CD4-positive, alpha-beta T cell (primary cell): ENCODE measurements at regions of chr7 and their contacts with region 1.

Region 1: GRCh38 chr7:57579454-57579853 is 129.5 kb downstream of the ZNF716 start:
- DNase-seq: no peak
- ATAC-seq: no peak
- H3K4me3 ChIP-seq: no peak overlapping the region
- H3K4me3 Mint-ChIP-seq: no peak overlapping the region
- H3K27ac ChIP-seq: no peak overlapping the region
- H3K27ac Mint-ChIP-seq: no peak overlapping the region
- H3K4me1 ChIP-seq: no peaks in the 10 kb centered on the region
- H3K4me1 Mint-ChIP-seq: no peaks in the 10 kb centered on the region
- H3K27me3 ChIP-seq: no peaks in the 10 kb centered on the region
- H3K27me3 Mint-ChIP-seq: no peaks in the 10 kb centered on the region
- CTCF ChIP-seq: no peak

Region 2: DNA sequence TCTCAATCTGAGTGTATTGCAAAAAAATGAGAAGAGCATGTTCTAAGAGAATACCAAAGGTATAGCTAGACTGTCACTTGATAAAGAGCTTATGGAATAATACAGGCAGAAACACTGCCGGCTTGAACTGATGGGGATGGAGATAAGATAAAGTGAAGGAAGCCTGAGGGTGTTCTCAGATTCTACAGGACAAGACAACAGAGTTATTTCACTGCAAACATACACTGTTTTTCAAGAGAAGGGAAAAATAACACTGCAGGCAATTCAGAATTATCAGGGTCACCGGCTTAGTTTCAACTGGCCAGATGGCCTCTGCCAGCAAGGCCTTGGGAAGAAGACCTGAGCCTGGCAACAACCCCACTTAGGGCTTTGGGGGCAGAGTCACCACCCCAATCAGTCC is 49.5 kb before region 1 on chr7:
- CTCF ChIA-PET with region 1: no interaction called
- POLR2A ChIA-PET with region 1: no interaction called
- intact Hi-C with region 1: loop called in 1 of 2 experiments (anchors 10 kb)
- DNase-seq: no peak
- ATAC-seq: no peak
- H3K4me3 ChIP-seq: no peak overlapping the region
- H3K4me3 Mint-ChIP-seq: no peak overlapping the region
- H3K27ac ChIP-seq: no peak overlapping the region
- H3K27ac Mint-ChIP-seq: no peak overlapping the region
- H3K4me1 ChIP-seq: no peaks in the 10 kb centered on the region
- H3K4me1 Mint-ChIP-seq: no peaks in the 10 kb centered on the region
- H3K27me3 ChIP-seq: no peaks in the 10 kb centered on the region
- H3K27me3 Mint-ChIP-seq: no peaks in the 10 kb centered on the region
- CTCF ChIP-seq: no peak

Region 3: GRCh38 chr7:57646901-57647246 is 67.4 kb after region 1 on chr7:
- CTCF ChIA-PET with region 1: no interaction called
- POLR2A ChIA-PET with region 1: no interaction called
- intact Hi-C with region 1: no loop called
- DNase-seq: no peak
- ATAC-seq: no peak
- H3K4me3 ChIP-seq: no peak overlapping the region
- H3K4me3 Mint-ChIP-seq: no peak overlapping the region
- H3K27ac ChIP-seq: no peak overlapping the region
- H3K27ac Mint-ChIP-seq: no peak overlapping the region
- H3K4me1 ChIP-seq: no peaks in the 10 kb centered on the region
- H3K4me1 Mint-ChIP-seq: no peaks in the 10 kb centered on the region
- H3K27me3 ChIP-seq: no peaks in the 10 kb centered on the region
- H3K27me3 Mint-ChIP-seq: no peaks in the 10 kb centered on the region
- CTCF ChIP-seq: no peak